ENCODE measurements at regions of chr9 and their contacts with region 1.

Region 1: DNA sequence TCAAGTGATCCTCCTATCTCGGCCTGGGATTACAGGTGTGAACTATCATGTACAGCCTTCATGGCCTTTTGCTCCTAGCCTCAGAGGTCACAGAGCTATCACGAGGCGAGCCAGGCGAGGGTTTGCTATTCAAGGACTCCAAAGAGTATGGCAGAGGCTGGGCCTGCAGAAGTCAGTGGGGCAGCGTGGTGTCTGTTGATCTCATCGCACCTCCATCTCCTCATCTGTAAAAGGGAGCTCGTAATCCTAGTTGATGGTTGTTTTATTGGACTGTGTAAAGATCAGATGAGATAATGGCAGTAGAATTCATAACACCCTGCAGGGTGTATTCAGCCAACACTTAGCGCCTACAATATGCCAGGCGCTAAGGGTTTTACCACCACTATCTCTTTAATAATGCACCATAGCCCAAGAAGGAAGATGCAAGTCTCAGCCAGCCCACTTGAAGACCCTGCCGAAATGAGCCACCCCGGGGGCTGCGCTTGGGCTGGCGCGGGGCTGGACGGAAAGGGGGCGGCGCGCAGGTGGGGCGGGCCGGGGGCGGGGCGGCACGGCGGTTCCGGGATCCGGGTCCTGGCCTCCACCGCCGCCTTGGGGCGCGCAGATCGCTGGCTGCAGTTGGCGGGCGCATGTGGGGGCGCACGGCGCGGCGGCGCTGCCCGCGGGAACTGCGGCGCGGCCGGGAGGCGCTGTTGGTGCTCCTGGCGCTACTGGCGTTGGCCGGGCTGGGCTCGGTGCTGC is at the start of gene GALNT12:
- DNase-seq: peak in 1 of 2 experiments; percentile 77
- H3K4me3 ChIP-seq: peak within 1 kb of the TSS; percentile 38 to 67 (median 59)
- H3K27ac ChIP-seq: no peak within 1 kb of the TSS
- H3K4me1 ChIP-seq: peaks cover 5 to 22% (median 14%) of the 10 kb centered on the region in 4 experiments
- H3K27me3 ChIP-seq: peaks cover 0 to 5% (median 2%) of the 10 kb centered on the region in 4 experiments; a peak in 2 of 7 replicates
- CTCF ChIP-seq: peak in 1 of 3 experiments; percentile 15; a peak in 1 of 4 replicates
- EP300 ChIP-seq: no peak
- POLR2A ChIP-seq: peak in 1 of 2 experiments; percentile 40; a peak in 1 of 3 replicates
- RAD21 ChIP-seq: no peak
- total RNA-seq, gene GALNT12: 17.5 and 19.6 TPM in 2 replicates

Region 2: DNA sequence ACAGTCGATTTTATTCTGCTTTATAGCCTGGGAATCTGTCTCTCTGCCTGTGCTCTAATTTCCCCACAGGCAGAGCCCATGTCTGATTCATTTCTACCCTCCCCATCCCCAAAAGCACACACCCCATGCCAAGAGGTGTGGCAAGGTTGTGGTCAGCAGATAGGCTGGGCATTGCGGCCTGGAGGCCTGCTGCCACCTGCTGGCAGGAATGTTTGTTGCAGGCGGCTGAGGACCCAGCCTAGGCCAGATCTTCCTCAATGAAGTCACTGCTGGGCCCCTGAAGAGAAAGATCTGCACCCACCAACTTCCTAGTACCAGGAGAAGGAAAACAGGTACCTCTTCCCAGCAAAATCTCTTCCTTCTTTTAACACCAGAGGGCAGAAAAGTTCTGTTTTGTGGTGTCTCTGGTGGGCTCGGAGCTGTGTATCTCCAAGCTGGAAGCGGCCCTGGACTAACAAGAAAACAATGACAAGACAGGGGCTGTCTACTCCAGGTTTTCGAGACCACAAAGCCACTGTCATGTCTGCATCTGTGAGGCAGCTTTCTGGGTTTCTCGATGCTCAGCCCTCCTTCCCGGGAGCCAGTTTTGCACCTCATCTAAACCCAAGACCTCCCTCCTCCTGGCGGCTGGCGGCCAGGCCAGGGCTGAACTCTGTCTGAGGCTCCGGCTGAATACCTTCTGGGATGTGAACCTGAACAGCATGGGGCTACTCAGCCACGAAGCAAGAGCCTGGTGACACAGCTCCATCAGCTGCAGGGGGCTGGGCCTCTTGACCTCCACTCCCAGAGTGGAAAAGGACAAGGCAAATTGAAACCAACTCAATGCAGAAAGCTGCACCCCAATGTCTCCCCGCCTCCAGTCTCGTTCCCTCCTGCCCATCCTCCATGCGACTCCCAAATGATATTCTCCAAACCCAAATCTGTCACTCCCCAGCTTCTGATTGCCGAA is 15.8 kb before region 1 on chr9:
- CTCF ChIA-PET with region 1: interaction called, 28 read pairs
- POLR2A ChIA-PET with region 1: interaction called, 16 read pairs
- DNase-seq: peak; percentile 80 to 93
- H3K4me3 ChIP-seq: no peak overlapping the region
- H3K27ac ChIP-seq: peak overlapping the region; percentile 14; the same call in 1 of the 2 replicates
- H3K4me1 ChIP-seq: peaks cover 5 to 18% (median 8%) of the 10 kb centered on the region in 4 experiments
- H3K27me3 ChIP-seq: no peaks in the 10 kb centered on the region
- CTCF ChIP-seq: peak; percentile 80 to 98 (median 96)
- EP300 ChIP-seq: no peak; a peak in 1 of 3 replicates
- POLR2A ChIP-seq: no peak
- RAD21 ChIP-seq: peak; percentile 34 to 53

Region 3: GRCh38 chr9:98796364-98797101 is 10.7 kb before region 1 on chr9 and contains the start of gene ANKS6:
- CTCF ChIA-PET with region 1: interaction called, 28 read pairs
- POLR2A ChIA-PET with region 1: interaction called, 16 read pairs
- DNase-seq: peak in 1 of 2 experiments; percentile 95
- H3K4me3 ChIP-seq: peak within 1 kb of the TSS; percentile 63 to 82 (median 68)
- H3K27ac ChIP-seq: no peak within 1 kb of the TSS; the same call in 1 of the 2 replicates
- H3K4me1 ChIP-seq: peaks cover 5 to 20% (median 7%) of the 10 kb centered on the region in 4 experiments
- H3K27me3 ChIP-seq: no peaks in the 10 kb centered on the region; a peak in 1 of 7 replicates
- CTCF ChIP-seq: peak; percentile 56 to 67 (median 59)
- EP300 ChIP-seq: no peak
- POLR2A ChIP-seq: peak in 1 of 2 experiments; percentile 59; a peak in 2 of 3 replicates
- RAD21 ChIP-seq: peak in 1 of 2 experiments; percentile 16; a peak in 1 of 4 replicates
- total RNA-seq, gene ANKS6: 56.3 and 61.2 TPM in 2 replicates

Region 4: GRCh38 chr9:98833090-98833956 is 26.1 kb after region 1 on chr9:
- CTCF ChIA-PET with region 1: no interaction called
- POLR2A ChIA-PET with region 1: no interaction called
- DNase-seq: no peak
- H3K4me3 ChIP-seq: no peak overlapping the region
- H3K27ac ChIP-seq: no peak overlapping the region
- H3K4me1 ChIP-seq: peaks cover 0 to 2% (median under 1%) of the 10 kb centered on the region in 4 experiments; a peak in 2 of 7 replicates
- H3K27me3 ChIP-seq: no peaks in the 10 kb centered on the region
- CTCF ChIP-seq: no peak
- EP300 ChIP-seq: no peak
- POLR2A ChIP-seq: no peak
- RAD21 ChIP-seq: no peak

Region 5: DNA sequence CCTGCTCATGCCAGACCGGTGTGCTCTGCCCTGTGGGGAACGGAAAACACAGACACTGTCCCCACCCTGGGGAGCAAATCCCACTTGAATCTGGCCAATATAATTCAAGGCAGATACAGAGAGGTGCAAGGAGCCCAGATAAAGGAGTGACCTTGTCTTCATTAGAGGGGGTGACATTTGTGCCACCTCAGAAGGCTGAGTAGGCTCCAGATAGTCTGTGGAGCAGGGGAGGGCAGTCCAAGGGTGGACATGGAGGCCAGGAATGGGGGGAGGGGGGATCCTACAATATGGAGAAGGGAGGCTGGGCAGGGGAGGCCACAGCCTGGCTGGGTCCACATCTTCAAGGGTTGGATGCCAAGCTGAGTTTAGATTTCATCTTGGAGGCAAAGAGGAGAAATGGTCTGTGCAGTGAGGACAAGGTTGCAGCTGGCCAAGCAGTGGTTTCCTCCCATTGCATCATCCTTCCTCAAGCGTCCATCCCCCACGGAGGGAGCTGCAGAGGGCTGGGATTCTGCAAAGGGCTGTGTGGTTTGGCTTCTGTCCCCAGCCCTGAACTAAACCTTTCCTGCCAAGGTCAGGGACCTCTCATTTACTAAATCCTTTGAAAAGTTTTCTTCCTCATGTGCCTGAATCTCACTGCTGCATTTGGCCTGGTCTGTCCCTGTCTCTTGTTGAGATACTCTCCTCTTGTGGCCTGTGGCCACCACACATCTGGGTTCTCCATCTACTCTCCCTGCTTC is 60.4 kb after region 1 on chr9:
- CTCF ChIA-PET with region 1: no interaction called
- POLR2A ChIA-PET with region 1: no interaction called
- DNase-seq: no peak
- H3K4me3 ChIP-seq: no peak overlapping the region
- H3K27ac ChIP-seq: no peak overlapping the region
- H3K4me1 ChIP-seq: no peaks in the 10 kb centered on the region
- H3K27me3 ChIP-seq: no peaks in the 10 kb centered on the region
- CTCF ChIP-seq: no peak
- EP300 ChIP-seq: no peak
- POLR2A ChIP-seq: no peak
- RAD21 ChIP-seq: no peak

Region 6: GRCh38 chr9:98899408-98900056 is 92.3 kb after region 1 on chr9:
- CTCF ChIA-PET with region 1: no interaction called
- POLR2A ChIA-PET with region 1: no interaction called
- DNase-seq: no peak
- H3K4me3 ChIP-seq: no peak overlapping the region
- H3K27ac ChIP-seq: no peak overlapping the region
- H3K4me1 ChIP-seq: no peaks in the 10 kb centered on the region
- H3K27me3 ChIP-seq: no peaks in the 10 kb centered on the region
- CTCF ChIP-seq: no peak
- EP300 ChIP-seq: no peak
- POLR2A ChIP-seq: no peak
- RAD21 ChIP-seq: no peak

Measured in H1 (cell line).